ENCODE measurements at regions of chr3 and their contacts with region 1.

Region 1: GRCh38 chr3:171162986-171163723 is 136.6 kb upstream of the SLC2A2 start:
- DNase-seq: peak; percentile 62

Region 2: DNA sequence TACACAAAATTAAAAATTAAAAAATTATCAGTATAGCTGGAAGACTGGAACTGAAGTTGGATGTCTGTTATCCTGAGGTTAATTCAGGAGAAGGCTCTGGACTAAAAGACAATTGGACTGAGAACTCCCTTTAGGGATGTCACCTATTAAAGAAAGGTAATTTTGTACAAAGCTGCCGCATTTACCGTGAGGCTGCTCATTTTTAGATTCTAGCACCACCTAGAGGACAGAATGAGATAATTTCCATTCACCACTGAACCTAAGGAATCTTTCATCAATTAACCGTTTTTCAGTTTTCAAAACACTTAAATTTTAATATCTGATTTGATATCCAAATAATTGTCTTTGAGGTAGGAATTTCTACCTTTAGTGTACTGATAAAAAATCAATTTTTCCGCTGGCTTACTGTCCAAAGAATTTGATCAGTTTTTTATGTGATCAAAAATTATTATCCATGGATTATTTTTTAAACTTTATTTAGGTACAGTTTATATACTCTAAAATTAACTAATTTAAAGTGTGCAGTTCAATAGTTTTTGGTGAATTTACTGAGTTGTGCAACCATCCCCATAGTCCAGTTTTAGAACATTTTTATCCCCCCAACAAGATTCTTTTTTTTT is 403.8 kb after region 1 on chr3:
- in situ Hi-C with region 1: loop called (anchors 25 kb)
- DNase-seq: peak; percentile 60